Right ventricle myocardium superior (tissue), 1 donor: ENCODE measurements at regions of chr3 and their contacts with region 1.

Region 1: DNA sequence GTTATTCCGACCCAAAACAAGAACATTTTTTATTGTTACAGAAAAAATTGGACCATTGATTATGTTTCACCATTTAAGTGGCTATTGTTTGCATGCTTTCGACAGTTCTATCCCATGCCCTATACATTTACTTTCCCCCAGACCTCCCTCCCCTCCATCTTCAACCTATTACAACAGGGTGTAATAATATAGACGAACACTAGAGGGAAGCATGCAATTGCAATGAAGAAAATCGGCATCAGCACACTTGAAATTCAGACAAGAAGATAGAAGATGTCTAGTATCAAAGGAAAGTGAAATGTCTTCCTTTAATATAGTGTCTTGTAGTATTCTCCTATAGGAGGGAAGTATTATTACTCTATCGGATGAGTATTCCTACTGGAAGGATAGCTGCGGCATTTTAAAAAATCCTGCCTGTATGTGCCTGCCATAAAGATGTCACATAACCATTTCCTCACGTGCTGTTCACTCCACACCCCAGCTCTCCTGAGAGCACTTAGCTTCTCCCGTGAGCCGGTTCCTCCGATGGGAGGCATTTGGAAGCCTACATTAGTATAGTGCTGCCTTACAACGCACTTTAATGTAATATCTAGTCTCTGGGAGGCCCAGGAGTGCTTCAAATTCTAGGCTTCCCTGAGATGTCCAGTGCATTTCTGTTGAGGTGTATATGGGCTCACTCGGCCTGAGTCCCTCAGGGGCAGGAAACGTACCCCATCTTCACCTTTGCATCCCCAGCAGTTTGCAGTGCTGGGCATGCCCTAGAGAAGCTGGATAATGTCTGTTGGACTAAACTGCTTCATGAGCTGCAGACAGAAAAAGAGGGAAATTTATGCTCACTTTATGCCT is 17.8 kb upstream of the ERICH6 start:
- DNase-seq: no peak
- ATAC-seq: peak; percentile 78

Region 2: GRCh38 chr3:150787741-150788370 is 66.3 kb after region 1 on chr3:
- intact Hi-C with region 1: loop called (anchors 10 kb)
- DNase-seq: peak; percentile 92
- ATAC-seq: peak; percentile 92

Region 3: GRCh38 chr3:150868282-150868681 is 146.8 kb after region 1 on chr3:
- intact Hi-C with region 1: loop called (anchors 5 kb)
- DNase-seq: no peak
- ATAC-seq: peak; percentile 45